ENCODE measurements at regions of chr1 and their contacts with region 1.

Region 1: GRCh38 chr1:225777583-225778336 is at the start of gene SRP9:
- DNase-seq: peak; percentile 98 to 99
- ATAC-seq: peak; percentile 97 to 98
- H3K4me3 ChIP-seq: peak within 1 kb of the TSS; percentile 78 to 98 (median 86)
- H3K27ac ChIP-seq: peak within 1 kb of the TSS; percentile 94 to 96 (median 95)
- H3K4me1 ChIP-seq: peaks cover 50% of the 10 kb centered on the region in 2 donors
- H3K27me3 ChIP-seq: no peaks in the 10 kb centered on the region
- CTCF ChIP-seq: peak; percentile 85 to 95 (median 89)
- POLR2A ChIP-seq: peak; percentile 73 to 85
- total RNA-seq, gene SRP9: 182 to 207 (median 198) TPM

Region 2: GRCh38 chr1:225554216-225554812 is 223.4 kb before region 1 on chr1:
- in situ Hi-C with region 1: loop called in 1 of 4 experiments (anchors 10 kb)
- intact Hi-C with region 1: loop called (anchors 5 kb)
- DNase-seq: no peak
- ATAC-seq: peak in 1 of 2 donors; percentile 44
- H3K4me3 ChIP-seq: no peak overlapping the region
- H3K27ac ChIP-seq: peak overlapping the region in 1 of 4 donors; percentile 1
- H3K4me1 ChIP-seq: peaks cover 9 to 28% of the 10 kb centered on the region in 2 donors
- H3K27me3 ChIP-seq: no peaks in the 10 kb centered on the region
- CTCF ChIP-seq: peak in 4 of 5 experiments; percentile 34 to 52 (median 47)
- POLR2A ChIP-seq: no peak

Region 3: GRCh38 chr1:225710804-225711203 is 67.0 kb before region 1 on chr1:
- in situ Hi-C with region 1: no loop called
- intact Hi-C with region 1: no loop called
- DNase-seq: no peak
- ATAC-seq: no peak
- H3K4me3 ChIP-seq: no peak overlapping the region
- H3K27ac ChIP-seq: peak overlapping the region in 2 of 4 donors; percentile 27 to 38
- H3K4me1 ChIP-seq: peaks cover 6 to 12% of the 10 kb centered on the region in 2 donors
- H3K27me3 ChIP-seq: no peaks in the 10 kb centered on the region
- CTCF ChIP-seq: no peak
- POLR2A ChIP-seq: no peak

Region 4: GRCh38 chr1:225834417-225835329 is 56.9 kb after region 1 on chr1:
- in situ Hi-C with region 1: loop called in 1 of 4 experiments (anchors 10 kb)
- intact Hi-C with region 1: no loop called
- DNase-seq: peak; percentile 71 to 85
- ATAC-seq: peak; percentile 93 to 97
- H3K4me3 ChIP-seq: no peak overlapping the region
- H3K27ac ChIP-seq: peak overlapping the region; percentile 49 to 81 (median 72)
- H3K4me1 ChIP-seq: peaks cover 17 to 26% of the 10 kb centered on the region in 2 donors
- H3K27me3 ChIP-seq: no peaks in the 10 kb centered on the region
- CTCF ChIP-seq: no peak
- POLR2A ChIP-seq: no peak

Region 5: DNA sequence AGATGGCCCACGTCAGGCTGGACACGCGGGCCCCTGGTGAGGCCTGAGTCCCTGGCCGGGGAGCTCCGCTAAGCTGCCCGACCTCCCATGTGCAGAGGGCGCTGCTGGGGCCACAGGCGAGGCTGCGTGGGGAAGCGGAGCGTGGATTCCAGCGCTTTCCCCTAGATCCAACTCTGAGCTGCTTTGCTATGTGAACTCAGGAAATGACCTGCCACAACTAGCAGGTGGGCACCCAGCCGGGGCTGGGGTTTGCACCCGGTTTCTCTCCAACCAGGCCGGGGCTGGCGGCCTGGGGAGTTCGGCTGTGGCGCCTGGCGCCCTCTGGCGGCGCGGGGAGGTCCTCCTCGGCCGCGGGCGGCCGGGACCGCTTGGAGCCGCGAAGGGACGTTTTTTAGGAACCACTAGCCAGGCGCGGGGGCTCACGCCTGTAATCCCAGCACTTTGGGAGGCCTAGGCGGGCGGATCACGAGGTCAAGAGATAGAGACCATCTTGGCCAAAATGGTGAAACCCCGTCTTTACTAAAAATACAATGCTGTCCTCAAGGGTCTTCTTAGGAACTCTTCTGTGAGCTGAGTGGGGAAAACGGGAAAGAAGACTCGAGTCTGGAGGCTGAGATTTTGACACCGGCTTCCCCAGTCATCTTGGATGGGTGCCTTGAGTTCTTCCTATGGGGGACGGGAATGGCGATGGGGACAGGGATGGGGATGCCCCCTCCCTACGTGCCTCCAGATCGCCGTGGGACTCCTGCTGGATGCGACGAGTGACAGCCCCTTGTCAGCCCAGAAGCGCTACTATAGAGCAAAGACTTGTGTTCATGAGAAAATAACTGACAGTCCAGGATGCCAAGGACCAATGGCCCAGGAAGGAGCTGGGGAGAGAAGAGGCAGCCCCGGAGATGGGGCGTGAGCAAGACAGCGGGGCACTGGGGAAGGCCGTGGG is 133.7 kb after region 1 on chr1:
- in situ Hi-C with region 1: loop called in 2 of 4 experiments (anchors 10 kb)
- intact Hi-C with region 1: loop called (anchors 1 kb)
- DNase-seq: peak in 1 of 2 donors; percentile 40
- ATAC-seq: peak; percentile 55 to 84
- H3K4me3 ChIP-seq: peak overlapping the region in 2 of 4 donors; percentile 10 to 17
- H3K27ac ChIP-seq: no peak overlapping the region
- H3K4me1 ChIP-seq: no peaks in the 10 kb centered on the region
- H3K27me3 ChIP-seq: no peaks in the 10 kb centered on the region
- CTCF ChIP-seq: peak; percentile 66 to 92 (median 83)
- POLR2A ChIP-seq: no peak

Region 6: DNA sequence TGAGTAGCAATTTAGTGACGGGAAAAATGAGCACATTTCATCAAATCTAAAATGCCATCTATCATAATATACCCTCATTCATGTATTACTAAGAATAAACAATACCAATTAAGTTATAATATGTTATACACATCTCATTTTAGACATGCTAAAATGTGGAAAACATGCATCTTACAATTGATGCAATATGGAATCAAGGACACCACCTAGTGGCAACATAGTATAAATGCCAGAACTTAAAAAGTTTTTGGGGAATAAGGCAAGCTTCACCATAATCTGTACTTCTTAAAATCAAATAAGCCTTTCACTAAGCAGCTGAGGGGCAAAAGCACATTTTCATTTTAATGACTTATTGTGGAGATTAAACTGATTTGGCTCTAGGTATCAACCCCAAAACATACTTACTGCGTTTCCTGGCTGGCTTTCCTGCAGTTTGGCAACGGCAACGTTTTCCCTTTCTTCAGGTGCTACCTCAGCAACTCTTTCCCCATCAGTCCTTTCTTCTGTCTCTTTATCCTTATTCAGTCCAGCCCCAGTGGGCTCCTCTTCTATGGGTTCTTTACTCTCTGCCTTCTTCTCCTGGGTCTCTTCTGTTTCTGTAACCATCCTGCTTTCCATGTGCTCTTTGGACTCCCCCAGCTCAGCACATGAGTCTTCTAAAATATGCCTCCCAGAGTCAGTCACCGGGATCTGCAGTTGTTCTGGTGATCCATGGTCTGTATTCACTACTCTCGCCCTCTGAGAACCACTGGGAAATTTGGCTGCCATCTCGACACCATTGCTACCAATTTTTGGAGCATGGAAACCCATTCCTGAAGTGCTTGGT is 209.9 kb after region 1 on chr1:
- in situ Hi-C with region 1: loop called in 2 of 4 experiments (anchors 10 kb)
- intact Hi-C with region 1: no loop called
- DNase-seq: no peak
- ATAC-seq: peak in 1 of 2 donors; percentile 39
- H3K4me3 ChIP-seq: no peak overlapping the region
- H3K27ac ChIP-seq: peak overlapping the region; percentile 12 to 29 (median 16)
- H3K4me1 ChIP-seq: peaks cover 0 to 13% of the 10 kb centered on the region in 2 donors
- H3K27me3 ChIP-seq: no peaks in the 10 kb centered on the region
- CTCF ChIP-seq: peak; percentile 31 to 72 (median 65)
- POLR2A ChIP-seq: no peak